ENCODE measurements at regions of chr19 and their contacts with region 1.

Region 1: GRCh38 chr19:54159352-54160181 is at the start of gene LENG1:
- DNase-seq: peak; percentile 100
- H3K4me3 ChIP-seq: peak within 1 kb of the TSS; percentile 81
- H3K27ac ChIP-seq: peak within 1 kb of the TSS; percentile 82
- H3K4me1 ChIP-seq: peaks cover 26% of the 10 kb centered on the region
- CTCF ChIP-seq: peak; percentile 64
- total RNA-seq, gene LENG1: 8.0 TPM in 2 replicates

Region 2: GRCh38 chr19:54102421-54103169 is 57.0 kb before region 1 on chr19 and contains the start of gene NDUFA3:
- CTCF ChIA-PET with region 1: no interaction called
- POLR2A ChIA-PET with region 1: no interaction called
- intact Hi-C with region 1: loop called (anchors 2 kb)
- DNase-seq: peak; percentile 99
- H3K4me3 ChIP-seq: peak within 1 kb of the TSS; percentile 94
- H3K27ac ChIP-seq: peak within 1 kb of the TSS; percentile 24
- H3K4me1 ChIP-seq: peaks cover 11% of the 10 kb centered on the region
- CTCF ChIP-seq: no peak
- total RNA-seq, gene NDUFA3: 32.0 and 92.4 TPM in 2 replicates

Region 3: DNA sequence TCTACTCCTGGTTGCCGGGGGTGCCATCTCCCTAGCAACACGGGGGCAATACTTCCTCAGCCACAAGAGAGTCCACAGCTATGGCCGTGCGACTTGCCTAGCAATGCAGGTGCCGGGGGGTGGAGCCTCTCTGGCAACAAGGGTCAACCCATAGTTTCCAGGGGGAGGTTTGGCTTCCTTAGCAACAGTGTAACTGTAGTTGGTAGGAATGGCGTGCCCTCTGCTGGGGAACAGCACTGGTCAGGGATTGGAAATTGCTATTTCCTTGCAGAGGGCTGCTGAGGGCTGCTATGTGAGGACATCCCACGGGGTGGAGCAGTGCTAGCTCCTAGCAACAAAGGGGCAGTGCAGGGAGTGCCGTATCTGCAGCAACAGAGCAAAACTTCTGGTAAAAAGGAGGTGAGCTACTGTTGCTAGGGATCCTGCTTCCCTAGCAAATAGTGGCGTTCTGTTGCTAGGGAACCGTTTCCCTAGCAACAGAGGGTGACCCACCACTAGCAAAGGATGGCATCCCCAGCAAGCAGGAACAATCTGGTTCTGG is 20.4 kb after region 1 on chr19:
- CTCF ChIA-PET with region 1: no interaction called
- POLR2A ChIA-PET with region 1: no interaction called
- intact Hi-C with region 1: no loop called
- DNase-seq: peak; percentile 75
- H3K4me3 ChIP-seq: no peak overlapping the region
- H3K27ac ChIP-seq: no peak overlapping the region
- H3K4me1 ChIP-seq: peaks cover 10% of the 10 kb centered on the region
- CTCF ChIP-seq: peak; percentile 78